PC-3 (cell line): ENCODE measurements at regions of chr17 and their contacts with region 1.

Region 1: DNA sequence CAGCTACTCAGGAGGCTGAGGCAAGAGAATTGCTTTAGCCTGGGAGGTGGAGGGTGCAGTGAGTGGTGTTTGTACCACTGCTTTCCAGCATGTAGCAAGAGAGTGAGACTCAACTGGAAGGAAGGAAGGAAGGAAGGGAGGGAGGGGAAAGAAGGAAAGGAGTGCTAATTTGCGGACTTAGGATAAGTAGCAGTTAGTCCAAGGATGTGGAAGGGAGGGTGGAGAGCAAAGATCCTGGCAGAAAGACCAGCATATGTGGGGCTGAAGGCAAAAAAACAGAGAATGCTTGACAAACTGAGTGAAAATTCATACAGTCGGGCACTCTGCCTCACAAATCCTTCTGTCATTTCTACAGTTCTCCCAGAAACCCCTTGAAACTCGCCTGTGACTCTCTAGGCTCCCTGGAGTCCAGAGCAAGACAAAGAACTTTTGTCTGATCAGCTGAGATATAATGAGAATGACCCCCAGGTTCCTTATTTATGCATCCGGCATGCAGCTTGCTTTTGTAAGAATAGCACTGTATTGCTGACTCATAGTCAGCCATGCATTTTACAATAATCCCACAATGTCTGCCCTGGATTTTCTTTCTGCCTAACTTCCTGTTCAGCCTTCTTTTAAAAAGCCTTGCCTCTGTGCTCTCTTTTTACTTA is 31.5 kb downstream of the CDK5RAP3 start:
- DNase-seq: peak; percentile 94
- ATAC-seq: peak; percentile 87
- H3K4me3 ChIP-seq: peak overlapping the region; percentile 29; the same call in 1 of the 2 replicates
- H3K27ac ChIP-seq: peak overlapping the region; percentile 97
- H3K4me1 ChIP-seq: peaks cover 54% of the 10 kb centered on the region
- H3K27me3 ChIP-seq: no peaks in the 10 kb centered on the region
- CTCF ChIP-seq: no peak

Region 2: DNA sequence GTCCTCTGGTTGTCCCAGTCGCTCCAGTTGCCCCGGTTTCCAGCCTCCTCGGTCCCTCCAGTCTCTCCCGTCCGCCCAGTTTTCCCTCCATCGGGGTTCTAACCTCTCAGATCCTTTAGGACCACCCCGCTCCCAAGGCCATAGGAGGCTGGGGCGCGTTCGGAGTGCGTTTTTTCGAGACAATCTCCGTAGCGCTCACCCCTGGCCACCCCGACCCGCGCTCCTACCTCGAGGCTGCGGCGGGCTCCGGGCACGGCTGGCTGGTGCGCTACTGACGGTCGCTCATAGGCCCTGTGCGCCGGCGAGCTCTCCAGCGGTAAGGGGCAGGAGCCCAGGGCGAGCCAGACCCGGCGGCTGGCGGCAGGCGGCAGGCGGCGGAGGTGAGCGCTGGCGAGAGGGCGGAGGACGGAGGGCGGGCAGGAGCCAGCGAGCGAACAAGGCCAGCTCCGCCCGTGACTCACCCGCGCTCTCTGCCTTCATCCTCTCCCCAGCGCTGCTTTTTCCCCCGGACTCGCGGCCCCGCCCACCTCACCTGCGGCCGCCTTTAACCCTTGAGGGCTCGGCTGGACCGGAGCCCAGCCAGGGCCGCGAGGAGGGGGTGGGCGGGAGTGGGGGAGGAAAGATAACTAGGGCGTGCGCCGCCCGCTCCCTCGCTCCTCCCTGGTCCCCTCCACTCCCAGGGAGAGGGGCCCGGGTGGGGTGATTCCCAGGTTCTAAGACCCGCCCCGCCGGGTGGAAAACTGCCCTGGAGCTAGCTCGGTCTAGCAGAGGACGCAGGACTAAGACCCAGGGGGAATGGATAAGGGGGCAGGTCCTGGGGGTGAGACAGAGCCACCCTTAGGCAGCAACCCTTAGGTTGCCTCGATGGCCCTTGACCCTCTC is 151.5 kb before region 1 on chr17 and contains the start of gene SP6:
- CTCF ChIA-PET with region 1: no interaction called
- POLR2A ChIA-PET with region 1: no interaction called
- intact Hi-C with region 1: no loop called
- DNase-seq: peak; percentile 93
- ATAC-seq: peak; percentile 97
- H3K4me3 ChIP-seq: peak within 1 kb of the TSS; percentile 88
- H3K27ac ChIP-seq: no peak within 1 kb of the TSS
- H3K4me1 ChIP-seq: peaks cover 16% of the 10 kb centered on the region
- H3K27me3 ChIP-seq: peaks cover 13% of the 10 kb centered on the region
- CTCF ChIP-seq: peak; percentile 38; the same call in 1 of the 2 replicates
- total RNA-seq, gene SP6: 3.1 and 3.9 TPM in 2 replicates

Region 3: DNA sequence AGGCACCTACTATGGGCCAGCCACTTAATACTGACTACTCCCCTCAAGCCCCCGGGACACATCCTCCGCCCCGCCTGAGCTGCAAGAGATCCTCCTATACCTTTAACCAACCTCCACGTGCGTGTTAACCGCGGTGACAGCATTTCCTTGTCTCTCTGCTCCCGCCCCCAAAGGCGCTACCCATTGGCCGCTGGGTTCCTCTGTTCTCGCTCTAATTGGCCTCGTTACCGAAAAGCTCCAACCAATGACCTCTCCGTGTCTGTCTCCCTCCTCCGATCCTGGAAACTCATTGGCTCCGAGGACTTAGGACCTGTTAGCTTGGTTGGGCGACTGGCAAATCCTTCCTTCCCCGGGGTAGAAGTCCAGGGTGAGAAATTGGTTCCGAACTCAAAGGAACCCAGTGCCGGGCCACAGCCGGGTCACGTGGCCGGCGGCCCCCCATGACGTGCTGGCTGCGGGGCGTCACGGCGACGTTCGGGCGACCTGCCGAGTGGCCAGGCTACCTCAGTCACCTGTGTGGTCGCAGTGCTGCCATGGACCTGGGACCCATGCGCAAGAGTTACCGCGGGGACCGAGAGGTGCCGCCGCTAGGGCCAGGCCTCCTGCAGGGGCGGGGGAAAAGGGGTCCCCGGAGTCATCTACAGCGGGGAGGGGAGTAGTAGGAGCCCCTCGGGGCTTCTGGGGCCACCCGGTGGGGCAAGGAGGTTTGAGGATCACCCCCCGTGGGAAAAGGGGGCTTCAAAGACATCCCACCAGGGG is 61.0 kb before region 1 on chr17 and contains the start of gene PNPO:
- CTCF ChIA-PET with region 1: no interaction called
- POLR2A ChIA-PET with region 1: interaction called, 20 read pairs
- intact Hi-C with region 1: no loop called
- DNase-seq: peak; percentile 100
- ATAC-seq: peak; percentile 98
- H3K4me3 ChIP-seq: peak within 1 kb of the TSS; percentile 77
- H3K27ac ChIP-seq: peak within 1 kb of the TSS; percentile 24; the same call in 1 of the 2 replicates
- H3K4me1 ChIP-seq: peaks cover 24% of the 10 kb centered on the region
- H3K27me3 ChIP-seq: no peaks in the 10 kb centered on the region
- CTCF ChIP-seq: no peak; the same call in 1 of the 2 replicates
- total RNA-seq, gene PNPO: 49.8 and 57.5 TPM in 2 replicates

Region 4: DNA sequence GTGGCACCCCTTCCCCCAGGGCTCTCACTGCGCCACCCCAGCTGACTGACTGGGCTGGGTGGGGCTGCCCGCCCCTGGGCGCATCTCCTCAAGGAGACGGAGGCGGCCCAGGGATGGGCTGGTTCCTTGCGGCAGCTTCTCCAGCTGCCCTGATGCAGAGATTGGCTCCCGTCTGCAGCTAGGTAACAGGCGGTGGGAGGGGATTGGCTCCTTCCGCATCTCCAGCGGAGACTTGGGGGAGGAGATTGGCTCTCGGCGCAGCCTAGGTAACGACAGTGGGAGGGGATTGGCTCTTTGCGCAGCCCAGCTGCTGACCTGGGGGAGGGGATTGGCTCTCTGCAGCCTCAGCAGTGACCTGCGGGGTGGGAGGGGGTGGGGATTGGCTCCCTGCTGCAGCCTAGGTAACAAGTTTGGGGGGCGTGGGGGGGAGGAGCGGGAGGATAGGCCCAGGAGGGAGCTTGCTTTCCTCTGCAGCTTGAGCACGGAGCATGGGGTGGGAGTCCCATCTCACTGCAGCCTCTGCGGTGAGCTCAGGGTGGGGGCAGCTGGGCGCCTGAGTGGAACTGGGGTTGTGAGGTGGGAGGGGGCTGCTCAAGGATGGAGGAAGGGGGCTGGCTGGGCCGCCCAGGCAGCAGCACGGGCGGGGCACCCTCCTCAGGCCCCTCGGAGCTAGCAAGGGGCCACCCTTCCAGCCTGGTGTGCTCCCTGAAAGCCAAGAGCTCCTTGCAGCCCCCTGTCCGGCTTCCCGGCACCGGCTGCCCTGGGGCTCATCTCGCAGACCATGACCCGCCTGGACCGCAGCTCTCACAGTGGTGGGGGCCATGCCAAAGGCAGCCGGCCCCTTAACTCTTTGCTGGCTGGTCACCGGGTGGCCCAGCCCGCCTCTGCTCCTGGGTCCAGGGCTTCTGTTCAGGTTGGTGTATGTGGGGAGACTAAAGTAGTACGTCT is 52.1 kb after region 1 on chr17:
- CTCF ChIA-PET with region 1: no interaction called
- POLR2A ChIA-PET with region 1: interaction called, 31 read pairs
- intact Hi-C with region 1: no loop called
- DNase-seq: no peak
- ATAC-seq: no peak
- H3K4me3 ChIP-seq: no peak overlapping the region
- H3K27ac ChIP-seq: no peak overlapping the region
- H3K4me1 ChIP-seq: peaks cover 40% of the 10 kb centered on the region
- H3K27me3 ChIP-seq: no peaks in the 10 kb centered on the region
- CTCF ChIP-seq: no peak